ENCODE measurements at regions of chr7 and their contacts with region 1.

Region 1: GRCh38 chr7:116138202-116138801 is 72.0 kb upstream of the TES start:
- DNase-seq: peak; percentile 65 to 78 (median 73)
- H3K4me3 ChIP-seq: no peak overlapping the region
- H3K27ac ChIP-seq: no peak overlapping the region
- H3K4me1 ChIP-seq: peaks cover 0 to 12% (median 0%) of the 10 kb centered on the region in 4 experiments
- H3K27me3 ChIP-seq: no peaks in the 10 kb centered on the region

Region 2: DNA sequence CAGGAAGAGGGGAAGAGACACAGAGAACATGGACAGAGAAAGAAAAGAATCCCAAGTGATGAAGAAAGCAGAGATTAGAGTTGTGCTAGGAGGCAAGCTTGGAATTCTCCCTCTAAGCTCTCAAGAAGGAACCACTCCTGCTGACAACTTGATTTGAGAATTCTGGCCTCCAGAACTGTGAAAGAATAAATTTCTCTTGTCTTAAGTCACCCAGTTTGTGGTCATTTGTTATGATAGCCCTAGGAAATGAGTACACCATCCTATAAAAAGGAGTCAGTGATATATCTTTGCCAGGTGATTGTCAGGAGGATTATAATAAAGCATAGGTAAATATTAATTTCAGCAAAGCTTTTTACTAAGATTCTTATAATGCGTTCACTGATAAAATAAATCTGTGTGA is 25.0 kb before region 1 on chr7:
- CTCF ChIA-PET with region 1: no interaction called
- POLR2A ChIA-PET with region 1: no interaction called
- DNase-seq: no peak
- H3K4me3 ChIP-seq: no peak overlapping the region
- H3K27ac ChIP-seq: no peak overlapping the region
- H3K4me1 ChIP-seq: peaks cover 0 to 6% (median 0%) of the 10 kb centered on the region in 4 experiments
- H3K27me3 ChIP-seq: no peaks in the 10 kb centered on the region

Region 3: DNA sequence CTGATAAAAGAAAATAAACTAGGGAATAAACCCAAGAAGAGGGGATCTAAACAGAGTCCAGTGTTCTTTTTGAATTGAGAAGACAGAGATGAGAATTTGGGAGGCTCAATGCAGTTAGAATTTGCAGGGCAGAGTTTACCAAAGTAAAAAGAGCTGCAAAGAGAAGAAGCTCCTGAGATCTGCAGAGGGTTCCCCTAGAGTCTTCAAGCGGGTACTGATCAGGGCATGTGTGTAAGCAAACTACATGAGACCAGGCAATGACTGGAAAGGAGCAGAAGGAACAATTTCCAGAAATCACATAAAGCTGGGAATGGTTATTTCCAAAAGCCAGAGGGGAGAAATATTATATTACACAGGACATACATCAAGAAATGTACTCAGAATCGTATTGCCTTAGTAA is 14.0 kb after region 1 on chr7:
- CTCF ChIA-PET with region 1: interaction called, 10 read pairs
- POLR2A ChIA-PET with region 1: no interaction called
- DNase-seq: no peak
- H3K4me3 ChIP-seq: no peak overlapping the region
- H3K27ac ChIP-seq: no peak overlapping the region
- H3K4me1 ChIP-seq: no peaks in the 10 kb centered on the region
- H3K27me3 ChIP-seq: no peaks in the 10 kb centered on the region

Region 4: GRCh38 chr7:116165717-116166116 is 27.4 kb after region 1 on chr7:
- CTCF ChIA-PET with region 1: interaction called, 12 read pairs
- POLR2A ChIA-PET with region 1: no interaction called
- DNase-seq: peak; percentile 79 to 97 (median 97)
- H3K4me3 ChIP-seq: no peak overlapping the region
- H3K27ac ChIP-seq: peak overlapping the region in 1 of 2 experiments; percentile 43
- H3K4me1 ChIP-seq: peaks cover 0 to 37% (median 14%) of the 10 kb centered on the region in 4 experiments
- H3K27me3 ChIP-seq: no peaks in the 10 kb centered on the region

Region 5: GRCh38 chr7:116197360-116197759 is 59.1 kb after region 1 on chr7:
- CTCF ChIA-PET with region 1: no interaction called
- POLR2A ChIA-PET with region 1: no interaction called
- DNase-seq: no peak
- H3K4me3 ChIP-seq: no peak overlapping the region
- H3K27ac ChIP-seq: no peak overlapping the region
- H3K4me1 ChIP-seq: no peaks in the 10 kb centered on the region
- H3K27me3 ChIP-seq: no peaks in the 10 kb centered on the region